Colonic mucosa (tissue), 4 donors: ENCODE measurements at regions of chr3 and their contacts with region 1.

Region 1: DNA sequence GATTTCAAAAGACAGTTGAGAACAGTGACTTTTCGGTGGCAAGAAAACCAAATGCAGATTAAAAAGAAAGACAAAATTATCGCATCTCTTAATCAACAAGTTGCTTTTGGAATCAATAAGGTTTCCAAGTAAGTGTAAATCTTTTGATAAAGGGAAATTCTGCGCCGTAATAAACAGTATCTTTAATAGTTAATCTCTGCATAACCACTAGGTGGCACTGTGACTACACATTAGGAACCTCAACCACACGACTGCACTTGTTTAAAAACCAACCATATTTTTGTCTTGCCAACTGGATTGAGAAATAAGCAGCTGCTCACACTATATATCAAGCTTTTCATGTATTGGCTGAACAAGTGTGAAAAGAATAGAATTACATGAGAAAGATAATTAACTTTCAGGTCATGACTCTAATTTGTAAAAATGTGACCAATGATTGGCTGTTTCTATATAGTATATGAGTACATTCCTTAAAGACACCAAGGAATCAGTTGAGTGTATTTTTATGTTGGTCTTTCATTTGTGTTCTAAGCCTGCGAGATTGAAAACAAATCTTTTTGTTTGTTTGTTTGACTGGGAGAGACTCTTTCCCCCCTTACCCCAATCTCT is 72.7 kb downstream of the DZIP3 start:
- DNase-seq: peak; percentile 36
- H3K4me3 ChIP-seq: no peak overlapping the region
- H3K27ac ChIP-seq: no peak overlapping the region
- H3K4me1 ChIP-seq: no peaks in the 10 kb centered on the region
- H3K27me3 ChIP-seq: no peaks in the 10 kb centered on the region
- CTCF ChIP-seq: peak; percentile 66

Region 2: DNA sequence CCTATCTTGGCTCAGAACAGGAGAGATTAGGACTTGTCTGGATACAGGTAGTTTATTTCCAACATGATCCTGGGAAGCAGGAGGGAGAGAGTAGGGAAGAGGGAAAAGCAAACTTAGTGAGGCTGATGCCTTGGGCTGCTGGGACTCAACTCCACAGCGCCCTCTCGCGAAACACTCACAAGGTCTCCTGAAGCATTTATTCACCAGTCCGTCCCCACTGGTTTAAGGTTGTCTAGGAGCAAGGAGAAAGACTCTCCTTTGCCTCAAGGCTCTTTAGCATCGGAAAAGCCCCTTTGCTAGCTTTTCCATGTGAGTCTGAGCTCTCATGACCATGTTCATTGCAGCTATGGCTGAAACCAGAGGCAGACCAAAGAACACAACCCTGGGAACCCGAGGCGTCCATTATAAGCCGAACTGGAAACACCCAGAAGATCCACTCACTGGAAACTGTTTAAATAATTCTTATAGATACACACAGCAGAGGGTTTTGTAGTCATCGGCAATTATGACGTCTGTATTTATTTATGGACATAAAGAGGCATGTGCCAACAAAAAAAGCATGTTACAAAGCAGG is 815.9 kb before region 1 on chr3:
- intact Hi-C with region 1: no loop called
- DNase-seq: peak; percentile 64
- H3K4me3 ChIP-seq: no peak overlapping the region
- H3K27ac ChIP-seq: no peak overlapping the region
- H3K4me1 ChIP-seq: no peaks in the 10 kb centered on the region
- H3K27me3 ChIP-seq: no peaks in the 10 kb centered on the region
- CTCF ChIP-seq: peak; percentile 46

Region 3: GRCh38 chr3:108673988-108674661 is 11.9 kb after region 1 on chr3:
- intact Hi-C with region 1: loop called (anchors 1 kb)
- DNase-seq: no peak
- H3K4me3 ChIP-seq: no peak overlapping the region
- H3K27ac ChIP-seq: no peak overlapping the region
- H3K4me1 ChIP-seq: no peaks in the 10 kb centered on the region
- H3K27me3 ChIP-seq: no peaks in the 10 kb centered on the region
- CTCF ChIP-seq: no peak

Region 4: DNA sequence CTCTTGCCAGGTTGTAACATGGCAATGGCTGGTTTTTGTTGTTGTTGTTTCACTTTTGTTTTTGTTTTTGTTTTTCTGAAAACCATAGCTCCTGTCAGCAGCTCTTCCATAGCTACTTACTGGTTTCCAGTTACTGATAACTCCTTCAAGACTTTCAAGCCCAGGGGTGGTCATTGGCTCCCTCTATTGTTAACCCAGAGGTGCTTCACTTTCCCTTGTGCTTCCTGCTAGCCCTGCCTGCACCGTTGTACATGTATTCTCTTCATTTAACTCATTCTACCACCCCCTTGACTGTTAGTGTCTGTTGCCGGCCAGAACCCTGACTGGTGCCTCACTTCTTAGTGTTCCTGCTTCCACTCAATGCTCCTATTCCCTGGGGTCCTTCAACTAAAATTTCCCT is 156.2 kb after region 1 on chr3:
- intact Hi-C with region 1: loop called (anchors 5 kb)
- DNase-seq: peak; percentile 61
- H3K4me3 ChIP-seq: no peak overlapping the region
- H3K27ac ChIP-seq: no peak overlapping the region
- H3K4me1 ChIP-seq: no peaks in the 10 kb centered on the region
- H3K27me3 ChIP-seq: no peaks in the 10 kb centered on the region
- CTCF ChIP-seq: peak; percentile 43

Region 5: GRCh38 chr3:108914774-108915641 is 252.8 kb after region 1 on chr3:
- intact Hi-C with region 1: loop called (anchors 2 kb)
- DNase-seq: peak; percentile 48
- H3K4me3 ChIP-seq: no peak overlapping the region
- H3K27ac ChIP-seq: no peak overlapping the region
- H3K4me1 ChIP-seq: no peaks in the 10 kb centered on the region
- H3K27me3 ChIP-seq: no peaks in the 10 kb centered on the region
- CTCF ChIP-seq: peak; percentile 86